GM18951 (cell line): ENCODE measurements at regions of chr2 and their contacts with region 1.

Region 1: GRCh38 chr2:238263204-238264071 is 23.6 kb upstream of the HES6 start:
- POLR2A ChIP-seq: no peak

Region 2: GRCh38 chr2:237858294-237859081 is 404.9 kb before region 1 on chr2:
- in situ Hi-C with region 1: loop called (anchors 10 kb)
- POLR2A ChIP-seq: no peak

Region 3: GRCh38 chr2:238346544-238346943 is 83.1 kb after region 1 on chr2:
- in situ Hi-C with region 1: no loop called
- POLR2A ChIP-seq: no peak